Heart right ventricle (tissue), 16 donors: ENCODE measurements at regions of chr22 and their contacts with region 1.

Region 1: GRCh38 chr22:34243023-34243422 is 322.7 kb upstream of the LARGE1 start:
- DNase-seq: peak in 1 of 2 donors; percentile 9
- ATAC-seq: peak in 6 of 8 donors; percentile 46 to 83 (median 70)
- H3K4me3 ChIP-seq: no peak overlapping the region
- H3K27ac ChIP-seq: no peak overlapping the region
- H3K4me1 ChIP-seq: peaks cover 0 to 10% (median 0%) of the 10 kb centered on the region in 9 donors
- H3K27me3 ChIP-seq: no peaks in the 10 kb centered on the region
- CTCF ChIP-seq: no peak

Region 2: DNA sequence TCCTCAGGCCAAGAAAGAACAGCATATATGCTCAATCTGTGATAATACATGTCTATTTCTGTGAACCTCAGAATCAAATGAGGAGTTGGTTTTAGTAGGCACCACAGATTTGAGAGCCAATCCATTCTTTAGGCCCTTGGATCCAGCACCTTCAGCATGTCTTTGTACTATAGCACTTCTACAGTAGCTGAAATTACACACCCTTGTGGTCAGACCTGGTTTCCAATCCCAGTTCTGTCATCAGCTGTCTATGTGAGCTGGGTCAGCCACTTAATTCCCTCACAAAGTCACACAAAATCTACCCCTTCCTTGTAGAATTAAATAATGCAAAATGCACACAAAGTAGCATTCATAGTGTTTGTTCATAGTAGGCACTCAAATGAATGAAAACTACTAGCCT is 58.5 kb after region 1 on chr22:
- intact Hi-C with region 1: loop called in 1 of 10 experiments (anchors 10 kb)
- DNase-seq: no peak
- ATAC-seq: peak in 1 of 8 donors; percentile 51
- H3K4me3 ChIP-seq: no peak overlapping the region
- H3K27ac ChIP-seq: no peak overlapping the region
- H3K4me1 ChIP-seq: peaks cover 0 to 29% (median 3%) of the 10 kb centered on the region in 9 donors
- H3K27me3 ChIP-seq: no peaks in the 10 kb centered on the region
- CTCF ChIP-seq: no peak